Endothelial cell of umbilical vein (primary cell): ENCODE measurements at regions of chr1 and their contacts with region 1.

Region 1: DNA sequence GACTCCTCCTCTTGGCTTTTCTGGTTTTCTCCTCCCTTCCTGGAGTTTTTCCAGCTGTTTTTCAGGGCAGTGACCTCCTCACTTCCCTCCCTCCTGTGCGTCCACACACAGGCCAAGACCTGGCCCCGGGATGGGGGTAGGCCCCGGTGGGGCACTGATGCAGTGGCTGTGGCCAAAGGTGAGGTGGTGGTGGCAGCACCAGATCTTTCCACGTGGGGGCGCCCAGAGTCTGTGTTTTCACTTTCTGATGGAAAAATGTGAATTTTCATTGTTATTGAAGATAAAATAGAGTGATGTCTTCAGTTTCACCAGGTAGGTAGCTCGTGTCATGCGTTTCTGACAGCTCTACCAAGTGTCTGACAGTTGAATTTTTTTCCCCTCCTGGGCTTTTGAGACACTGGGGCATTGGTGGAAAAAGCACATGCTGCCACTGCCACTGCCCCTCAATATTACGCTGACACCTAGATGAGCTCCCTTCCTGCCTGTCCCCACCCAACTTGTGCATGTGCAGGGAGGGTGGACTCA is 39.9 kb upstream of the MAGOH start:
- DNase-seq: peak; percentile 36
- H3K4me3 ChIP-seq: no peak overlapping the region
- H3K27ac ChIP-seq: no peak overlapping the region
- H3K4me1 ChIP-seq: no peaks in the 10 kb centered on the region
- H3K27me3 ChIP-seq: no peaks in the 10 kb centered on the region
- CTCF ChIP-seq: peak; percentile 79 to 83
- POLR2A ChIP-seq: no peak

Region 2: DNA sequence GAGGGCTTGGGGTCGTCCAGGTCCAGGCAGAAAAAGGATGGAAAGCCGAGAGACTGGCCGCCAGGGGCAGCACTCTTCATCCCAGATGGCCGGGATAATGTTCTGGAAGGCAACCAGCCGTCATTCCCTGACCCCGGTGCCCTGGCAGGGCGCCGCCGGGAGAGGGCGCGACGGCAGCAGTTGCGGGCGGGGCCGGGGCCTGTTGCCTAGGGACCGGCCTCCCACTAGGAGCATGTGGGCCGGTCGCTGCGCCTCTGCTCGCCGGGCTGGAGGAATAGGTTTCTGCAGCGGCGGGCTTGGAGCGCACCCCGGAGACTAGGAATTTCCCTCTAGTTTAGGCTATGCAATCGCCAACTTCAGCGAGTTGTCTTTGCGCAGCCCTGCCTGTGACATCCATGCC is 191.9 kb after region 1 on chr1:
- CTCF ChIA-PET with region 1: interaction called, 7 read pairs
- POLR2A ChIA-PET with region 1: no interaction called
- dilution Hi-C with region 1: no loop called
- intact Hi-C with region 1: loop called (anchors 5 kb)
- DNase-seq: peak; percentile 64
- H3K4me3 ChIP-seq: no peak overlapping the region
- H3K27ac ChIP-seq: no peak overlapping the region
- H3K4me1 ChIP-seq: no peaks in the 10 kb centered on the region
- H3K27me3 ChIP-seq: no peaks in the 10 kb centered on the region
- CTCF ChIP-seq: peak; percentile 87 to 92
- POLR2A ChIP-seq: no peak